Right cardiac atrium (tissue), 5 donors: ENCODE measurements at regions of chr9 and their contacts with region 1.

Region 1: DNA sequence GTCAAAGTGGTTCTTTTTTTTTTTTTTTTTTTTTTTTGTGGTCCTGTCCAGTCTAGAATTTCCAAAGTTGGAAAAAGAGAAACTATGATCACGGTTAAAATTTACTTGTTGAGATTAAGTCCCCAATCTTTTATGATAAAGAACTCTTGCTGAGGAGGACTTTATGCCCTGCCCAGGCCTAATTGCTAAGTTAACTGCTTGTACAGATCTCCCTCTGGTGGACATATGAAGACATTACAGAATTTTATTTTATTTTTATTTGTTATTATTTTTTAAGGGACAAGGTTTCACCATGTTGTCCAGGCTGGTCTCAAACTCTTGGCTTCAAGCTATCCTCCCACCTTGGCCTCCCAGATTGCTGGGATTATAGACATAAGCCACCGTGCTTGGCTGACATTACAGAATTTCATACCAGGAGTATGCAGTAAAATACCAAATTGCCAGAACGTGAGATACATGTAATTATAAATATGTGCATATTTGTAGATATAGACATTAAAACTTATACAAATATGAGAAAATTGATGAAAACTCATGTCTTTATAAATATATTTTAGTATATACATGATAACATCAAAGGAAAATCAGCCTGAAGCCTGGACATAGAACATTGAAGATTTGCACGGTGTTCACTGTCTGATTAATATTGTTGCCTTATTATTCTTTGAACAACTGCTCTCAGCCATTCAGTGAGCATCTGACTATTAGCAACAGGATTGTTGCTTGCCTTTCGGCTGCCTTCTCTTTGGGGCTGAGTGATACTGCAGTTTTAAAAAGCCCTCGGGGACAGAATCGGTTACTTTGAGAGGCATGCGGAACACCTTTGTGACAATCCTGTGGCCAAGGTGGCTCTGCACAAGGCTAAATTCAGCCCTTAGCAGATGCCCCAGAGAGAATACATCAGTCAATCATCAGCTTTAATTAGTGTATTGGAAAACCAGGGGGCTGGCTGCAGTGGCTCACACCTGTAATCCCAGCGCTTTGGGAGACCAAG is 91.0 kb downstream of the RFK start:
- DNase-seq: no peak
- ATAC-seq: peak; percentile 56 to 59
- H3K4me3 ChIP-seq: no peak overlapping the region
- H3K27ac ChIP-seq: no peak overlapping the region
- H3K4me1 ChIP-seq: no peaks in the 10 kb centered on the region
- H3K27me3 ChIP-seq: no peaks in the 10 kb centered on the region

Region 2: DNA sequence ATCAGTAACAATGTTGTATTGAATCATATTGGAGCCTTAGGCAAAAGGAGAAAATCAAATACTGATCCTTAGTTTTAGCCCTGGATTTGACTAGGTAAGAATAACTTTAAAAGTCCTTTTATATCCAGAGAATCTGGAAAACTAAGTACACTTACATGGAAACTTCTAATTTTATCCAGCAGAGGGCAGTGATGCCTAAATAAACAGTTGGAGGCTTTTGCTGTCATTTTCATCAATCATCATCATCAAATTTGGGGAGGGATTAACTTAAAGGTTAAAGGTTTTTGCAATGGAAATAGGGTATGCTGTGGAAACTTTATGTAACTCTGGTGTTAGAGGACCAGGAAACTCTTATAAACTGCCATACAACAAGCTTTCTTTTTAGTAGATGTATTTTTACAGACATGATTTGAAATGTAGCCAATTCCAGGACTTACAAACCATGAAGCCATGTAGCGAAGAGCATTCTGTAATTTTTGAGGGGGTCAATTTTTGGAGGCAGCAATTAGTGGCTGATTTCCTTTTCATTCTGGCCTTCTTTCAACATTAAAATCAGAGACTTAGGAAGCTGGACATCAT is 1102.3 kb before region 1 on chr9:
- intact Hi-C with region 1: loop called in 1 of 4 experiments (anchors 5 kb)
- DNase-seq: no peak
- ATAC-seq: no peak
- H3K4me3 ChIP-seq: no peak overlapping the region
- H3K27ac ChIP-seq: no peak overlapping the region
- H3K4me1 ChIP-seq: no peaks in the 10 kb centered on the region
- H3K27me3 ChIP-seq: no peaks in the 10 kb centered on the region

Region 3: GRCh38 chr9:75265525-75265972 is 1037.7 kb before region 1 on chr9:
- intact Hi-C with region 1: loop called in 1 of 4 experiments (anchors 10 kb)
- DNase-seq: peak in 1 of 3 donors; percentile 17
- ATAC-seq: peak; percentile 64 to 74
- H3K4me3 ChIP-seq: no peak overlapping the region
- H3K27ac ChIP-seq: no peak overlapping the region
- H3K4me1 ChIP-seq: no peaks in the 10 kb centered on the region
- H3K27me3 ChIP-seq: no peaks in the 10 kb centered on the region

Region 4: GRCh38 chr9:75890472-75891276 is 412.6 kb before region 1 on chr9 and contains the start of gene PCSK5:
- intact Hi-C with region 1: loop called in 2 of 4 experiments (anchors 10 kb)
- DNase-seq: peak; percentile 92 to 96 (median 96)
- ATAC-seq: peak; percentile 98
- H3K4me3 ChIP-seq: peak within 1 kb of the TSS; percentile 77
- H3K27ac ChIP-seq: peak within 1 kb of the TSS; percentile 63
- H3K4me1 ChIP-seq: peaks cover 2% of the 10 kb centered on the region
- H3K27me3 ChIP-seq: no peaks in the 10 kb centered on the region
- total RNA-seq, gene PCSK5: 4.9 to 7.6 (median 5.8) TPM

Region 5: DNA sequence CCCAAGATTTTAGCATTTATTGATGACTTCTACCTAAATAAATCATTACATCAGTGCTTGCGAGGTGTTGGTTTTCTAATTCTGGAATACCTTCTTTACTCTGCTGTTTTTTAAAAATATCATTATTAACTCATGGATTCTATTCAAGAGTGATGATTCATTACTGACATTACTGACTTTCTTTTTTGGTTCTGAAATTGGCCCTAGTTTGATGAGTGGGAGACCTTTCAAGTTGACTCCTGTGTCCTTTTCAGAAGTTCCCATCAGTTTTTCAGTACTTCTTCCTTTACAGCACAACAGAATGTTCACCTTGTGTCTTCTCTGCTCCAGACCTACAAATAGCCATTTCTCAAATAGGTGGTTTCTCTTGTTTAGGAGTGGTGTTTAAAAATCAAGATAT is 298.7 kb before region 1 on chr9:
- intact Hi-C with region 1: no loop called
- DNase-seq: no peak
- ATAC-seq: no peak
- H3K4me3 ChIP-seq: no peak overlapping the region
- H3K27ac ChIP-seq: no peak overlapping the region
- H3K4me1 ChIP-seq: peaks cover 2% of the 10 kb centered on the region
- H3K27me3 ChIP-seq: no peaks in the 10 kb centered on the region

Region 6: GRCh38 chr9:76216161-76216649 is 87.0 kb before region 1 on chr9:
- intact Hi-C with region 1: loop called in 2 of 4 experiments (anchors 5 to 10 kb)
- DNase-seq: no peak
- ATAC-seq: peak in 1 of 2 donors; percentile 39
- H3K4me3 ChIP-seq: no peak overlapping the region
- H3K27ac ChIP-seq: no peak overlapping the region
- H3K4me1 ChIP-seq: no peaks in the 10 kb centered on the region
- H3K27me3 ChIP-seq: no peaks in the 10 kb centered on the region

Region 7: GRCh38 chr9:76321205-76321828 is 18.1 kb after region 1 on chr9:
- intact Hi-C with region 1: no loop called
- DNase-seq: no peak
- ATAC-seq: no peak
- H3K4me3 ChIP-seq: no peak overlapping the region
- H3K27ac ChIP-seq: no peak overlapping the region
- H3K4me1 ChIP-seq: no peaks in the 10 kb centered on the region
- H3K27me3 ChIP-seq: no peaks in the 10 kb centered on the region